SK-N-SH (cell line): ENCODE measurements at regions of chr5 and their contacts with region 1.

Region 1: GRCh38 chr5:78972654-78973428 is 12.3 kb downstream of the ARSB start:
- DNase-seq: peak; percentile 62
- H3K4me3 ChIP-seq: no peak overlapping the region
- H3K27ac ChIP-seq: peak overlapping the region; percentile 27 to 87; a peak in 3 of 4 replicates
- H3K4me1 ChIP-seq: peaks cover 0 to 33% of the 10 kb centered on the region in 2 experiments; a peak in 2 of 4 replicates
- H3K27me3 ChIP-seq: no peaks in the 10 kb centered on the region
- CTCF ChIP-seq: no peak
- EP300 ChIP-seq: peak; percentile 21 to 94; a peak in 3 of 4 replicates
- RAD21 ChIP-seq: no peak; the same call in 1 of the 2 replicates

Region 2: DNA sequence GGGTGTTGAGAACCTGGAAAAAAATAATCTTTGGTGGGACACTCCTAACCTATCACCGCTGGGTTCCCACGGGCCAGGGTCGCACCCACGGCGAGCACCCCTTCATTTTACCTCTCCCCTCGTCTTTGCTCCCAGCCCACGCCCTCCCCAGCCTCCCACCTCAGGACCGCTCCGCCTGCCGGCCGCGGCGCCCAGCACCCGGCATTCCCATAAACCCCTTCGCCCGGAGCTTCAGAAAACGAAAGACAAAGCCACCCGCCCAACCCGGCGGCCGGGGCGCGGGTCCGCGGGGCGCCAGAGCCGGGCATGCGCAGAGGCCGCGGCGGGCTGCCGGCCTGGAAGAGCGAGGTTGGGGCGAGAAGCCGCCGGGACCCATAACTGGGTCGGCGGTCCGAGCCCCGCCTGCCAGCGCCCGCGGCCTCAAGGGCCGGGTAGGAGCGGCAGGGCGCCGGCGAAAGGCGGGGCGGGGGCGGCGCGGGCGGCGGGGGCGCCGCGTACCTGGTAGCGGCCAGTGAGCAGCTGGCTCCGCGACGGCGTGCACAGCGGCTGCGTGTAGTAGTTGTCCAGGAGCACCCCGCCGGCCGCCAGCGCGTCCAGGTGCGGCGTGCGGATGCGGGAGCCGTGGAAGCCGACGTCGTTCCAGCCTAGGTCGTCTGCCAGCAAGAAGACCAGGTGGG is 11.7 kb after region 1 on chr5:
- CTCF ChIA-PET with region 1: interaction called, 14 read pairs
- POLR2A ChIA-PET with region 1: interaction called, 8 read pairs
- DNase-seq: peak; percentile 97
- H3K4me3 ChIP-seq: peak overlapping the region; percentile 73 to 85
- H3K27ac ChIP-seq: peak overlapping the region; percentile 84 to 97
- H3K4me1 ChIP-seq: peaks cover 4 to 16% of the 10 kb centered on the region in 2 experiments; a peak in 2 of 4 replicates
- H3K27me3 ChIP-seq: no peaks in the 10 kb centered on the region
- CTCF ChIP-seq: peak; percentile 37
- EP300 ChIP-seq: 0 out of 4 replicates have a peak, but pooled peaks of 1 of the 2 experiments have one; percentile 8
- RAD21 ChIP-seq: peak; percentile 13; the same call in 1 of the 2 replicates